Activated naive CD4-positive, alpha-beta T cell treated with anti-CD3 and anti-CD28 coated beads for 36 hours (primary cell): ENCODE measurements at regions of chr6 and their contacts with region 1.

Region 1: DNA sequence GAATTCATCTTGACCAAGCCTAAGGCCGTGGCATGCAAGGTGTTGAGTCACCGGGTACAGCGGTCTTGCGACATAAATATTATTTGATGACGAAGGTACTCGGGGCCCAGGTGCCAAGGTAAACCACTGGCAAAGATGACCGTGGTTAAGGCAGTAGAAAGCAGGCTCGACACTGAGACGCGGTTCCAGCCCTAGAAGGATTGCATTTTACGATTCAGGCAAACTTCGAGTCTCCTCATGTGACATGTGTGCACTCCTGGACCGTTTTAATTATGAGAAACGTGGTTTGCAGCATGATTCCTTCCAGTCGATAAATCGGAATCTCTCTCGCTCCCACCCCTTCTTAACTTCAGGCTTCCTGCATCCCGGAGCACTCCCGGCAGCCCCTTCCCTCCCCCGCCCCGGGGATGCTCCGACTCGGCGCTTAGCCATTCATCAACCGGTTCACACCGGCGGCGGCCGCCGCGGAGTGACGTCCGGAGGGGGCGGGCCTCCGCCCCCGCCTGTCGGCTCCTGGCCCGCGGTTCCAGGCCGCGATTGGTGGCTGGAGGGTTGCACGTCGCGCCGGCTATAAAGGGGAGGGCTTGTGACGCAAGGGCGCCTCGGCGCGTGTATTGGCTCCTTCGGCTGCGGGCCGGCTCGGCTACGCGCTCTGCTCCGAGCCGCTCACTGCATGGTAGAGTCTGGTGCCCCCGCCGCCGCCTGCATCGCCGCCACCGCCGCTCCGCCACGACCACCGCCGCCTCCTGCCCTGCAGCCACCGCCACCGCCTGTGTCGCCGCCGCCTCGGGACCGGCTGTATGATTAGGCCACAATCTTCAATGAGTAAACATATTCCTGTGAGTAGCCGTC is at the starts of genes LOC128125822 and PTP4A1:
- DNase-seq: peak; percentile 97
- H3K4me3 Mint-ChIP-seq: peak within 1 kb of the TSS; percentile 86
- H3K27ac Mint-ChIP-seq: peak within 1 kb of the TSS; percentile 95
- H3K4me1 Mint-ChIP-seq: peaks cover 28% of the 10 kb centered on the region
- H3K27me3 Mint-ChIP-seq: no peaks in the 10 kb centered on the region
- total RNA-seq, gene PTP4A1: 46.8 to 51.9 TPM

Region 2: GRCh38 chr6:63352587-63353285 is 219.4 kb before region 1 on chr6:
- CTCF ChIA-PET with region 1: interaction called, 7 read pairs
- intact Hi-C with region 1: loop called (anchors 1 kb)
- DNase-seq: peak; percentile 11
- H3K4me3 Mint-ChIP-seq: no peak overlapping the region
- H3K27ac Mint-ChIP-seq: no peak overlapping the region
- H3K4me1 Mint-ChIP-seq: peaks cover 8% of the 10 kb centered on the region
- H3K27me3 Mint-ChIP-seq: peaks cover 22% of the 10 kb centered on the region

Region 3: DNA sequence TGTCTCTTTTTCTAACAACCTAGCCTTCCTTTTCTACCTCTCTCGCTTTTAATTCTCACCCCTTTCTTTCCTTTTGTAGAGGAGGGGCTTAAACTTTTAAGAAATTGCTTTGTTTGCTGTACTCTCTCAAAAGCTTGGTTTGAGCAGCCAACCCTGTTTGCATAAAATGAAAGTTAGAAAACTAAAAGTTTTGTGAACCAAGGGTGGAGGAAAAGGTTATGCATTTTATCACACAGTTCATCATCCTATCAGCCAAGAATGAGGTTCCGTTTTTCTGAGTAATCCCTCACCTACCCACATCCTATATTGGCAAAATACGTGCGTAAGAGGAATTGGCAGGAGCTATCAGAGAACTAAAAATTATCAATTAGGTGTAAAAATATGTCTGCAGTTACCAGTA is 42.6 kb before region 1 on chr6:
- CTCF ChIA-PET with region 1: interaction called, 4 read pairs
- intact Hi-C with region 1: loop called (anchors 1 kb)
- DNase-seq: no peak
- H3K4me3 Mint-ChIP-seq: no peak overlapping the region
- H3K27ac Mint-ChIP-seq: peak overlapping the region; percentile 54
- H3K4me1 Mint-ChIP-seq: peaks cover 7% of the 10 kb centered on the region
- H3K27me3 Mint-ChIP-seq: no peaks in the 10 kb centered on the region

Region 4: GRCh38 chr6:63635588-63636517 is 63.7 kb after region 1 on chr6 and contains the start of gene PHF3:
- CTCF ChIA-PET with region 1: interaction called, 6 read pairs
- intact Hi-C with region 1: loop called (anchors 1 kb)
- DNase-seq: peak; percentile 90
- H3K4me3 Mint-ChIP-seq: peak within 1 kb of the TSS; percentile 95
- H3K27ac Mint-ChIP-seq: peak within 1 kb of the TSS; percentile 92
- H3K4me1 Mint-ChIP-seq: peaks cover 37% of the 10 kb centered on the region
- H3K27me3 Mint-ChIP-seq: no peaks in the 10 kb centered on the region
- total RNA-seq, gene PHF3: 45.8 to 47.6 TPM